Adrenal gland (tissue), 19 donors: ENCODE measurements at regions of chr9 and their contacts with region 1.

Region 1: DNA sequence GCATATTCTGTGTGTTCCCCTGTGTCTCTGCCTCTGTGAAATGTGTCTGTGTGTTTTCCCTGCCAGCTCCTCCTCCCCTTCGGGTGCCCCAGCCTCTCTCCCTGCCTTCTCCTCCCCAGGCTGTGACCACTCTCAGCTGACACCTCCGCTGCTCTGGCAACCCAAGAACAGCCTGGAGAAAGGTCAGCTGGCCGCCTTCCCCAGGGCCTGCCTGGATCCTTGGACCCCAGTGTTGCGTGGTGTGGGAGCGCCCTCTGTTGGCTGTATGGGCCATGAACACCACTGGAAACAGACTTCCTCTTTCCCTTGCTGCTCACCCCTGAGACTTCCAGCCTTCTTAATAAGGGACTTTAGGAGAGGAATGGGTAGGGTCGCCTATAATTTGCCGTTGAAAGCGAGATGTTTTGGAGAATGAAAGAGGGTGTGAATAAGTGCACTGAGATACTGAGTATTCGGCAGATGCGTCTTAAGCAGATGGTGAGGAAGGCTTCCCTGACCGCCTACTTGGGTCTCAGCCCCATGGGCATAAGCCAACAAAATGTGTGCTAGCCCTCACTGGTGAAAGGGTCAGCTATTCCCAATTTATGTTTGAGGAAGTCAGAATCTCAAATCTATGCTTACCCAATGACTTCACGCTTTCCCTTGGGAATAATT is 114.9 kb upstream of the TRIM32 start:
- DNase-seq: peak; percentile 83 to 96 (median 90)
- H3K4me3 ChIP-seq: no peak overlapping the region
- H3K27ac ChIP-seq: no peak overlapping the region
- H3K4me1 ChIP-seq: peaks cover 0 to 22% of the 10 kb centered on the region in 2 donors
- H3K27me3 ChIP-seq: no peaks in the 10 kb centered on the region
- CTCF ChIP-seq: peak; percentile 77 to 96 (median 92)
- POLR2A ChIP-seq: no peak

Region 2: GRCh38 chr9:115591584-115591984 is 980.6 kb before region 1 on chr9:
- intact Hi-C with region 1: loop called in 1 of 2 experiments (anchors 10 kb)
- DNase-seq: peak; percentile 15 to 79 (median 72)
- H3K4me3 ChIP-seq: no peak overlapping the region
- H3K27ac ChIP-seq: peak overlapping the region in 1 of 5 donors; percentile 69
- H3K4me1 ChIP-seq: no peaks in the 10 kb centered on the region
- H3K27me3 ChIP-seq: peaks cover 4% of the 10 kb centered on the region
- CTCF ChIP-seq: peak in 5 of 6 experiments; percentile 55 to 78 (median 63)
- POLR2A ChIP-seq: no peak

Region 3: GRCh38 chr9:116149844-116150243 is 422.4 kb before region 1 on chr9:
- intact Hi-C with region 1: loop called in 1 of 2 experiments (anchors 10 kb)
- DNase-seq: peak in 4 of 7 donors; percentile 22 to 57 (median 27)
- H3K4me3 ChIP-seq: no peak overlapping the region
- H3K27ac ChIP-seq: no peak overlapping the region
- H3K4me1 ChIP-seq: peaks cover 4 to 6% of the 10 kb centered on the region in 2 donors
- H3K27me3 ChIP-seq: peaks cover 4% of the 10 kb centered on the region
- CTCF ChIP-seq: peak; percentile 26 to 56 (median 48)
- POLR2A ChIP-seq: no peak